ENCODE measurements at regions of chr17 and their contacts with region 1.

Region 1: DNA sequence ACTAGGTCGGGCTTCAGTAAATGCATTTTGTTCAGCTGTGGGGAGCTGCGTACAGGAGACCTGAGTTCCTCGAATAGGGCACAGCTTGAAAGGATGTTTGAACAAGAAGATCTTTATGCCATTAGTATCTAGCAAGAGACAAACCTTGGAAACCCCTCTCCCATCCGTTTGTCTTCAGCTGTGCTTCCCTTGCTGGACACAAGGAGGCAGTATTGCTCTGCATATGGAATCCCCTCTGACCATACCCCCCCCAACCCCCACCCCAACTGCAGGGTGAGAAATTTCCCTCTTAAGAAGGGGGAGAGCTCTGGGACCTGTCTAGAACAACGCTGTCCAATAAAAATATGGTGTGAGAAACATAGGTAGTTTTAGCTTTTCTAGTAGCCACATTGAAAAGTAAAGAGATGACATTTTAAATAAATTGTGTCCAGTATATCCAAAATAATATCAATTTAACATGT is 1.6 kb downstream of the MRM1 start:
- DNase-seq: peak; percentile 70
- H3K4me3 ChIP-seq: peak overlapping the region; percentile 73
- H3K27ac ChIP-seq: no peak overlapping the region
- H3K4me1 ChIP-seq: no peaks in the 10 kb centered on the region
- H3K27me3 ChIP-seq: no peaks in the 10 kb centered on the region
- CTCF ChIP-seq: peak; percentile 62

Region 2: DNA sequence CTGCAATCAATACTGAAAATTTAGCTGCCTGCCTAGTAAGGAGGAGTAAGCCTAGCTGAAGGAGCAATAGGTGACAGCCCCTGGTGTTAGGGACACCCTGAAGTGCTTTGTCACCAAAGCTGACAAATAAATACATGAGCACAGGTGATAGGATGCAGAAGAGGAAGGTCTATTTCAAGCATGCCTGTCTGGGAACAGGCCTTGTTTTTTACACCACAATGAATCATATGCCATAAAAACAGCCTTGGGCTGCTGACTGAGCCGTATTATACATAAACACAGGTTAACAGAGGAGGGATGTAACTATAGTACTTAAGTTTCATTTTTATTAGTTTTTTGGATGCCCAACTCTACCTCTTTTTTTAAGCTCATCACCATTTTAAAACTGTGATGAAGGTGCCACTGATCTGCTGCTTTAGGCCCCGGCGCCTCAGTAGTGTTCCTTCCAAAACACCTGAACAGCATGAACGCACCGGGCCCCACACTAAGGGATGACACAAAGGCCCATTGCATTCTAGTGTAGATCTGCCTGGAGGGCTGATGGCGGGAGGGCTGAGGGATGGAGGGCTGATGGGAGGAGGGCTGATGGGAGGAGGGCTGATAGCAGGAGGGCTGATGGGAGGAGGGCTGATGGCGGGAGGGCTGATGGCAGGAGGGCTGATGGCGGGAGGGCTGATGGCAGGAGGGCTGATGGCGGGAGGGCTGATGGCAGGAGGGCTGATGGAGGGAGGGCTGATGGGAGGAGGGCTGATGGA is 496.1 kb after region 1 on chr17:
- CTCF ChIA-PET with region 1: interaction called, 12 read pairs
- POLR2A ChIA-PET with region 1: no interaction called
- intact Hi-C with region 1: no loop called
- DNase-seq: no peak
- H3K4me3 ChIP-seq: no peak overlapping the region
- H3K27ac ChIP-seq: no peak overlapping the region
- H3K4me1 ChIP-seq: no peaks in the 10 kb centered on the region
- H3K27me3 ChIP-seq: no peaks in the 10 kb centered on the region
- CTCF ChIP-seq: no peak

Measured in A673 (cell line).